Calu3 (cell line): ENCODE measurements at regions of chr13 and their contacts with region 1.

Region 1: DNA sequence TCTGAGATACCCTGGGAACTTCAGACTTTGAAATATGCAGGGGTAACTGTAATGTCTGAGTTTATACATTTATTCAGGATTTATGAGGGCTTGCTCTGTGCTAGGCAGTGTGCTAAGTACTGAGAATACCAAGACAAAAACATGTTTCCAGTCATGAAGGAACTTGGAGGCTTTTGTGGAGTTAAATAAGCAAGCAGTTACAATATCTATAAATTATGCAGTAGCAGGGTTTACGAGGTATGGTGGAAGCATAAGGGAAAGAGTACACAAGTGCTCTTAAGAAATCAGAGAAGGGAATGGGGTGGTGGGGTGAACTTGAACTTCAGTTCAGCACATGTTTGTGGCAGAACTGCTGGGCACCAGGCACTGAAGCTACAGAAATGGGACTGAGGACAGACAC is 28.0 kb downstream of the MAB21L1 start:
- DNase-seq: no peak
- H3K4me3 Mint-ChIP-seq: no peak overlapping the region
- H3K27ac Mint-ChIP-seq: no peak overlapping the region
- H3K4me1 Mint-ChIP-seq: no peaks in the 10 kb centered on the region
- H3K27me3 Mint-ChIP-seq: no peaks in the 10 kb centered on the region
- CTCF ChIP-seq: no peak

Region 2: GRCh38 chr13:35460061-35460460 is 11.6 kb after region 1 on chr13:
- CTCF ChIA-PET with region 1: interaction called, 14 read pairs
- intact Hi-C with region 1: no loop called
- DNase-seq: no peak
- H3K4me3 Mint-ChIP-seq: no peak overlapping the region
- H3K27ac Mint-ChIP-seq: no peak overlapping the region
- H3K4me1 Mint-ChIP-seq: no peaks in the 10 kb centered on the region
- H3K27me3 Mint-ChIP-seq: no peaks in the 10 kb centered on the region
- CTCF ChIP-seq: no peak

Region 3: GRCh38 chr13:35470671-35471661 is 22.5 kb after region 1 on chr13:
- CTCF ChIA-PET with region 1: no interaction called
- intact Hi-C with region 1: no loop called
- DNase-seq: no peak
- H3K4me3 Mint-ChIP-seq: peak overlapping the region; percentile 62
- H3K27ac Mint-ChIP-seq: no peak overlapping the region
- H3K4me1 Mint-ChIP-seq: no peaks in the 10 kb centered on the region
- H3K27me3 Mint-ChIP-seq: no peaks in the 10 kb centered on the region
- CTCF ChIP-seq: no peak